GM12878 (cell line): ENCODE measurements at regions of chr18 and their contacts with region 1.

Region 1: GRCh38 chr18:49447810-49448745 is 12.4 kb downstream of the DYM start:
- DNase-seq: no peak
- ATAC-seq: peak; percentile 89
- H3K4me3 ChIP-seq: no peak overlapping the region
- H3K27ac ChIP-seq: no peak overlapping the region
- H3K4me1 ChIP-seq: no peaks in the 10 kb centered on the region
- H3K27me3 ChIP-seq: no peaks in the 10 kb centered on the region
- CTCF ChIP-seq: peak; percentile 39 to 50 (median 43)
- EP300 ChIP-seq: no peak
- POLR2A ChIP-seq: no peak
- RAD21 ChIP-seq: peak; percentile 44

Region 2: GRCh38 chr18:49052891-49053644 is 395.0 kb before region 1 on chr18:
- CTCF ChIA-PET with region 1: no interaction called
- POLR2A ChIA-PET with region 1: no interaction called
- RAD21 ChIA-PET with region 1: no interaction called
- SMC1A ChIA-PET with region 1: no interaction called
- in situ Hi-C with region 1: no loop called
- intact Hi-C with region 1: no loop called
- DNase-seq: no peak
- ATAC-seq: no peak
- H3K4me3 ChIP-seq: no peak overlapping the region
- H3K27ac ChIP-seq: no peak overlapping the region
- H3K4me1 ChIP-seq: peaks cover 10% of the 10 kb centered on the region
- H3K27me3 ChIP-seq: no peaks in the 10 kb centered on the region
- CTCF ChIP-seq: no peak
- EP300 ChIP-seq: no peak
- POLR2A ChIP-seq: no peak
- RAD21 ChIP-seq: no peak

Region 3: GRCh38 chr18:49412679-49413078 is 35.4 kb before region 1 on chr18:
- CTCF ChIA-PET with region 1: interaction called, 12 read pairs
- POLR2A ChIA-PET with region 1: no interaction called
- RAD21 ChIA-PET with region 1: no interaction called
- SMC1A ChIA-PET with region 1: no interaction called
- in situ Hi-C with region 1: no loop called
- intact Hi-C with region 1: no loop called
- DNase-seq: no peak
- ATAC-seq: no peak
- H3K4me3 ChIP-seq: no peak overlapping the region
- H3K27ac ChIP-seq: no peak overlapping the region
- H3K4me1 ChIP-seq: no peaks in the 10 kb centered on the region
- H3K27me3 ChIP-seq: no peaks in the 10 kb centered on the region
- CTCF ChIP-seq: no peak
- EP300 ChIP-seq: no peak
- POLR2A ChIP-seq: no peak
- RAD21 ChIP-seq: no peak

Region 4: GRCh38 chr18:49431165-49431962 is 16.7 kb before region 1 on chr18:
- CTCF ChIA-PET with region 1: interaction called, 44 read pairs
- POLR2A ChIA-PET with region 1: no interaction called
- RAD21 ChIA-PET with region 1: interaction called, 5 read pairs
- SMC1A ChIA-PET with region 1: interaction called, 7 read pairs
- in situ Hi-C with region 1: no loop called
- intact Hi-C with region 1: no loop called
- DNase-seq: no peak
- ATAC-seq: no peak
- H3K4me3 ChIP-seq: no peak overlapping the region
- H3K27ac ChIP-seq: no peak overlapping the region
- H3K4me1 ChIP-seq: no peaks in the 10 kb centered on the region
- H3K27me3 ChIP-seq: no peaks in the 10 kb centered on the region
- CTCF ChIP-seq: no peak
- EP300 ChIP-seq: no peak
- POLR2A ChIP-seq: no peak
- RAD21 ChIP-seq: no peak

Region 5: GRCh38 chr18:49459404-49460171 is 11.5 kb after region 1 on chr18:
- CTCF ChIA-PET with region 1: interaction called, 10 read pairs
- POLR2A ChIA-PET with region 1: interaction called, 8 read pairs
- RAD21 ChIA-PET with region 1: interaction called, 3 read pairs
- SMC1A ChIA-PET with region 1: interaction called, 13 read pairs
- in situ Hi-C with region 1: no loop called
- intact Hi-C with region 1: no loop called
- DNase-seq: no peak
- ATAC-seq: peak; percentile 71
- H3K4me3 ChIP-seq: peak overlapping the region; percentile 84
- H3K27ac ChIP-seq: peak overlapping the region; percentile 72
- H3K4me1 ChIP-seq: peaks cover 3% of the 10 kb centered on the region; the same call in 1 of the 2 replicates
- H3K27me3 ChIP-seq: no peaks in the 10 kb centered on the region
- CTCF ChIP-seq: no peak
- EP300 ChIP-seq: no peak
- POLR2A ChIP-seq: no peak
- RAD21 ChIP-seq: no peak